ENCODE measurements at regions of chr9 and their contacts with region 1.

Region 1: GRCh38 chr9:121376214-121376830 is 6.3 kb upstream of the STOM start:
- DNase-seq: no peak

Region 2: GRCh38 chr9:121213136-121213806 is 163.1 kb before region 1 on chr9:
- intact Hi-C with region 1: loop called in 1 of 2 experiments (anchors 2 kb)
- DNase-seq: peak; percentile 96

Region 3: GRCh38 chr9:121299467-121300234 is 76.7 kb before region 1 on chr9:
- intact Hi-C with region 1: no loop called
- DNase-seq: peak; percentile 93

Region 4: DNA sequence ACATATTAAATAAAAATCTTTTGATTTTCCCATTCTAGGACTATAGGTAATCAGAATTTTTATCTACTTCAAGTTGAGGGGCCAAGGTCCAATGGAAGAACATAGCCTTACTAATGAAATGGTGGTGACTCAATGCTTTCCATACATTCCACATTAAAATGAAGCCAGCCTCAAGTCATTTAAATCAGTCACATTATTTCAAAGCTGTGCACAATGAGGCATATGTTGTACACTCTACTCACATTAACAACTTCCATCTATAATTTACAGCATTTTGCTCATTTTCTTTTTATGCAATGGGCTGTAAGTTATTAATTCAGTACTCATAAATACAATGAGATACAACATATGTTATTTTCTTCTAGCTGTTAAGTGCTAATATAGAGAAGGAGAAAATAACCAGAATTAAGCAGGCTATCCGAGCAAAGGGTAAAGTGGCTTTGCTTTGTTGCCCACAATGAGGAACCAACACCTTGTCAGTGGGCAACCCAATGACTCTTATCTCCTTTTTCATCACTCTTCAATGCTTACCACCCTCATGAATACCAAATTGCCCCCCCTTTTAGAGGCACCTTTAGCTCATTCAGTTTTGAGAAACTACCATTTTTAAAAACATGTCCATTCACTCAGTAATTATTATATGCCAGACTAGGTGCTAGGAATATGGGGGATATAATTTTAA is 664.4 kb after region 1 on chr9:
- intact Hi-C with region 1: no loop called
- DNase-seq: no peak

Measured in posterior vena cava (tissue), 2 donors.